ENCODE measurements at regions of chr17 and their contacts with region 1.

Region 1: DNA sequence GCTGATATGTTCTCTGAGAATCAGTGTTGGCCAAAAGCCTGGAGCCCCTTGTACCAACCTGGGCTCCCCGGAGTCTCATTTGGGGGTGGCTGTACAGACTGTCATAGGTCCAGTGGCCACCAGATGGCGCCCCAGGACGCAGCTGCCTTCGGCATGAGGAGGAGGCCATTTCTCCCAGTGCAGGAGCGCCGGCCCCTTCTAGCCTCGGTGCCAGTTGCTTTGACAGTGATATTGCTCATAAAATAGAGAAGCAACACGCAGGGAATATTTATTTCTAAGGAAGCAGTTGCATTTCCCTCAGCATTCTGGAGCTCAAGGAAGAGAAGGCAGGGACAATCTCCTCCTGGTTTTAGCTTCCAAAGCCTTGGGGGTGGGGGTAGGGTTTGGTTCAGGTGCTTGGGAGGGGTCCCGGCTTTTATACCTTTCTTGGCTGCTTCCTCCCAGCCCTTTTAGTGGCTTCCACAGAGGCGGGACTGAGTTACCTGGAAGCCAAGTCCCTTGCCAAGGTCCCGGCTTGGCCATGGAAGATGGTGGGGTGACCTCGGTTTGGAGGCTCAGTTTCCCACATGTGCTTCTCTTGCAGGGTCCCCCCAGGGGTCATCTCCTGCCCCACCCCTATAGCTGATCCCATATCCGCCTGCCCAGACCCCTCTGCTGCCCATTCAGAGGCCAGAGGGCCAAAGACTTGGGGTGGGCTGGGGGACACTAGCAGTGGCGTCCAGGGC is 117.8 kb upstream of the CDC42EP4 start:
- DNase-seq: peak; percentile 76 to 81
- H3K4me3 ChIP-seq: no peak overlapping the region
- H3K27ac ChIP-seq: no peak overlapping the region
- H3K4me1 ChIP-seq: peaks cover 0 to 5% (median 0%) of the 10 kb centered on the region in 4 donors
- H3K27me3 ChIP-seq: peaks cover 0 to 19% of the 10 kb centered on the region in 2 donors
- CTCF ChIP-seq: peak; percentile 90 to 94

Region 2: DNA sequence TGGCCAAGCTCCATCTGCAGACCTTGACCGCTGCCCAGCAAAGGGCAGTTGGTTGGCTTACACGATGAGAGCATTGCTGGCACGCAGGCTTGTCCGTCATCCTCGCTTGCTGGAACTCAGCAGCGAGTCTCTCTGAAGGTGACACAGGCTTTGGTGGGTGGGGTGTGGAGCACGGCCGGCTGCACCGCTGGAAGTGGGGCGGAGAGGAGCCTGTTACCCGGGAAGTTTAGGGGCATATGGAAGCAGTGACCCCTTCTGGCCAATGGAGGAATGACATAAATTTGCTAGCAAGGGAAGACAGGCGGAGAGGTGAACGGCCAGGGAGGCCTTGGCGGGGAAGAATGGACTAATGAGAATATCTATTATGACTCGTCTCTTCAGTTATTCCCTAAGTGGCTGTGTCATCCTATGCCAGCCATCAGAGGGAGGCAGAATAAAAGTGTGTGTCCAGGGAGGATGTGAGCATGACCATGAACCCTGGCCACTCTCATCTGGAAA is 280.5 kb after region 1 on chr17:
- intact Hi-C with region 1: loop called (anchors 5 kb)
- DNase-seq: peak in 1 of 2 donors; percentile 34
- H3K4me3 ChIP-seq: no peak overlapping the region
- H3K27ac ChIP-seq: no peak overlapping the region
- H3K4me1 ChIP-seq: no peaks in the 10 kb centered on the region
- H3K27me3 ChIP-seq: peaks cover 0 to 60% of the 10 kb centered on the region in 2 donors
- CTCF ChIP-seq: peak; percentile 52 to 63

Region 3: GRCh38 chr17:74176546-74177001 is 747.0 kb after region 1 on chr17:
- intact Hi-C with region 1: loop called (anchors 5 kb)
- DNase-seq: peak in 1 of 2 donors; percentile 49
- H3K4me3 ChIP-seq: no peak overlapping the region
- H3K27ac ChIP-seq: no peak overlapping the region
- H3K4me1 ChIP-seq: no peaks in the 10 kb centered on the region
- H3K27me3 ChIP-seq: peaks cover 0 to 54% of the 10 kb centered on the region in 2 donors
- CTCF ChIP-seq: peak; percentile 69 to 70